ENCODE measurements at regions of chr12 and their contacts with region 1.

Region 1: DNA sequence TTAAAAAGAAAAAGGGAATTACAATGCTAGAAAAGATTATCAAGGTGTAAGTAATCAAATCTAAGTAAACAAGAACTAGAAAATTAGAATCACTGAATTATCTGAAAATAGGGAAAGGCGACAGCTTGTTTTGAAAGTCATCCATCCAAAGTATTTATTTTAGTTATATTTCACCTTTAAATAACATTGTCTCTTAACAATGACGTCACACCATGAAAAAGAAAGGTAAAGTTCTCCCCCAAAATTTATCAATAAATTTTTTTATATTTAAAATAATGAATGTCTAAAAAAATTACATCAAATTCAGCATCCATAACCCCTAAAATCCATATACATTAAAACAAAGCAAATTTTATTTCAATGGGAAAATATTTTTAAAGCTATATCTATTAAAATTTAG is 223.2 kb downstream of the RERGL start:
- DNase-seq: no peak
- ATAC-seq: no peak

Region 2: DNA sequence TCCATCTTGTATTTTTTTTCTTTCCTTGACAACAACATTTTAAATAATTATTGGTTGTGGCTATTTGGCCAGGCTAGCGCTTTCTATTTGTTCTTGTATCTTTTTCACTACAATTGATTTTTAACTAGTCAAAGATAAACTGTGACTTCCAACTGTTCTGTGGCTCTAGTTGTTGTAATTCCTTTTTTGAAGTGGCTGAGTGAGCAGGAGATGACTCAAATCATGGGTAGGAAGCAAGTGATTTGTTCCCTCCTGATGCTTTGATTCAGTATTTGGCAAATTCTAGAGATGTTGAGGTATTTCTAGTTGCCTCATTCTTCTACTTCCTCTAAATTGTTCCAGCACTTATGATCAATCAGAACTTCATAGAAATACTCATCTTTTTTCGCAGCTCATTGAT is 410.3 kb before region 1 on chr12:
- intact Hi-C with region 1: no loop called
- DNase-seq: no peak
- ATAC-seq: no peak

Region 3: GRCh38 chr12:17778242-17778641 is 88.6 kb before region 1 on chr12:
- intact Hi-C with region 1: loop called (anchors 2 to 5 kb)
- DNase-seq: no peak
- ATAC-seq: no peak